ENCODE measurements at regions of chr12 and their contacts with region 1.

Region 1: DNA sequence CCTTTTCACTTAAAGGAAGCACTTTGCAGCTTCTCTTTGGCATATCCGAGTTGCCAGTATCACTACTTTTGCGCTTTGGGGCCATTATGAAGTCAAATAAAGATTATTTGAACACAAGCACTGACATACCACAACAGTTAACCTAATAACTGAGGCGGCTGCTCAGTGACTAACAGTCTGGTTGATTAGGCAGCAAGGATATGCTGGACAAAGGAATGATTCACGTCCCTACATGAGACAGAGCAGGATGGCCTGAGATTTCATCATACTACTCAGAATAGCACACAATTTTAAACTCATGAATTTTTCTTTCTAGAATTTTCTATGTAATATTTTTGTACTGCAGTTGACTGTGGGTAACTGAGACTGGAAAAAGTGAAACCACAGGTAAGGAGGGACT is 56.9 kb upstream of the E2F7 start:
- DNase-seq: no peak
- ATAC-seq: peak; percentile 23

Region 2: GRCh38 chr12:76942267-76942666 is 180.0 kb before region 1 on chr12:
- intact Hi-C with region 1: no loop called
- DNase-seq: no peak
- ATAC-seq: no peak

Region 3: DNA sequence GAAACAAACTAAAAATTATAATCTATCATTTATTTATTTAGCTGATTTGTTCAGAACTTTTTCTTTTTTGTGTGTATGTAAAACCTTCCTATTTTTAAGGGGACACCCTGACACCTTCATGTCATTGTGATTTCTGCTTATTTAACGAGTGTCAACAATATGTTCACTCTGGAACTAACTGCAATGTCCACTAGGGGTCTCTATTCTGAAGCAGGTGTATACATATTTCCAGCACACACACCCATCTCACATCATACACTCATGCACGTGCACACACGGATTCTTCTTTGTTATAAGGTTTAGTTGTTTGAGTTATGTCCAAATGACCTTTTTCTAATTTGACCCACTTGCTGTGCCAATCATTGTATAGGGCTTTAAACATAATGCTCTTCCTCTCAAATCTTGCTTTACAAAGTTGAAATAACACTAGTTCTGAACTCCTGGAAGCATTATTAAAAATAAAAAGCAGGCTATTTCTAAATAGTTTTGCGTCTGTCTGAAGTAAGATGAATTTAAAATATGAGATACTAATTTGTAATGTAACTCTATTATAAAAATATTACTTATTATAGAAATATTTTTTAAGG is 72.4 kb before region 1 on chr12:
- intact Hi-C with region 1: loop called (anchors 10 kb)
- DNase-seq: no peak
- ATAC-seq: peak; percentile 60